Activated T-helper 2 cell treated with anti-CD3 and anti-CD28 coated beads, Interferon-gamma antibody, Interleukin-2, Interleukin-4, amounts not matched to agents 10 μg/mL and 5 μg/mL and 100 μg/mL, durations not matched to agents 14 hours and 24 hours and 36 hours (primary cell): ENCODE measurements at regions of chr5 and their contacts with region 1.

Region 1: DNA sequence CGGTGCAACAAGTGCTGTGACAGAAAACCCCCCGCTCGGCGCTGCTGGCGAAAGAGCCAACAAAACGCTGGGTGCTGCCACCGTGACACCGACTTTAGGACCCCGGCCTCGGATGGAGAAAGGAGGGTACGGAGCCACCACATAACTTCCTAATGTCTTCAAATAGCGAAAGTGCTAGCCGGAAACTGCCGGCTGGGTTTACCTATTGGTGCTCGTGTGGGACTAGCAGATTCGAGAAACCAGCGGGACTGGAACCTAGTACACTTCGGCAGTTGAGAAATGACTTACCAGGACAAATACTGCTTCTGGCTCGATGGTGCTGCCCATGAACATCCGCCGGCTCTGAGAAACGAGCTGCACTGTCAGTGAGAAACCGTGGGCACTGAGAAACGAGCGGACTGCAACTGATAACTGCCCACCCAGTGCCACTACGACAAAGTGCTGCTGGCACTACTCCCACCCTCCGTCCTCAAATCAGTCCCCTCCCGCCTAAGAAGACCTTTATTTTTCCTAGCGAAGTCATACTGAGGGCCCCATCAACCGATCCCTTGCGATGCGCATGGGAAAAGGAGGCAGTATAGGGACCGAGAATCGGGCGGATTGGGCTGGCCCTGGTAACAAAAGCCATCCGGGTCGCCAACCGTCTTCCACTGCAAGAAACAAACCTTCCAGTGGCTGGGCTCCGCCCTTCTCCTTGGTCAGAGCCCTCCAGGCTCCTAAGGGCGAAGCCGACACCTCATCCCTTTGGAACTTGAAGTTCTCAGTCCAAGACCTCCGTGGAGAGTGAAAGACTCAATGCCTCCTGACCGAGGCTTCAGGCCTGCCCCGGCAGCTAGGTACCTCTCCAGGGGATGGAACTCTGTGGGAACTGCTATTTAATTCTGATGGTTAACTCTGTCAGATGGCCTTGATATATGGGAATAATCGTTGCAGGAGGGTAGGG is 27.0 kb upstream of the ANXA2R start:
- DNase-seq: peak; percentile 85
- H3K4me3 Mint-ChIP-seq: peak overlapping the region; percentile 91
- H3K27ac Mint-ChIP-seq: peak overlapping the region; percentile 97
- H3K4me1 Mint-ChIP-seq: peaks cover 32% of the 10 kb centered on the region
- H3K27me3 Mint-ChIP-seq: no peaks in the 10 kb centered on the region

Region 2: GRCh38 chr5:42994246-42995151 is 72.6 kb before region 1 on chr5:
- intact Hi-C with region 1: loop called (anchors 1 kb)
- DNase-seq: peak; percentile 86
- H3K4me3 Mint-ChIP-seq: peak overlapping the region; percentile 100
- H3K27ac Mint-ChIP-seq: peak overlapping the region; percentile 100
- H3K4me1 Mint-ChIP-seq: peaks cover 32% of the 10 kb centered on the region
- H3K27me3 Mint-ChIP-seq: no peaks in the 10 kb centered on the region

Region 3: DNA sequence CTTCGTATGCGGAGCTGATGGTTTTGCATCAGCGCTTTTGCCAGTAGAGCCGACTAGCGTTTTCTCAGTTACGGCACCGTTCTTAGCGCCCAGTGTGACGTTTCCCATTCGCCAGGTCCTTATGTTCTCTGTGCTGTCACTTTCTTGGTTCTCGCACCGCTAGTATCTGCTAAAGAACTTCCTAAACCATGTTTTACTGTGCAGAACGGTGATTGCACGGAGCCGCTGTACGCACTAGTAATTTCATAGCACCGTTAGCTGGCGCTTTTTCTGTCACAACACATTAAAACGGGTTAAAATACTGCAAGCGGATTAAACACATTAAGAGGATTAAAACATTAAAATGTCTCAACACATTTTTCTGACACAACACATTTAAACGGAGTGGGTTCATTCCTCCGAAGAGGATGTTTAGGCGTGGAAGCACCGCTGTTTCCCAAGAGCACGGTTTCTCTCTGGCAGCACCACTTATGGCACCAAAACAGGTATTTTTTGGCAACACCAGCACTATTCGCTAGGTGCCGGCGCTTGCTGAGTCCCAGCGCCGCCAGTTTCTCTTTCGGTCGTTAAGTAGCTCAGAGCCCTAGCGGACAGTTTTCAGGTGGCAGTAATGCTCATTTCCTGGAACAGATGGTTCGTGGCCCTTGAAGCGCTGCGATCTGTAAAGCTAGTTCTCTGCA is 47.3 kb before region 1 on chr5:
- intact Hi-C with region 1: loop called (anchors 1 kb)
- DNase-seq: peak; percentile 84
- H3K4me3 Mint-ChIP-seq: peak overlapping the region; percentile 96
- H3K27ac Mint-ChIP-seq: peak overlapping the region; percentile 99
- H3K4me1 Mint-ChIP-seq: peaks cover 38% of the 10 kb centered on the region
- H3K27me3 Mint-ChIP-seq: no peaks in the 10 kb centered on the region

Region 4: DNA sequence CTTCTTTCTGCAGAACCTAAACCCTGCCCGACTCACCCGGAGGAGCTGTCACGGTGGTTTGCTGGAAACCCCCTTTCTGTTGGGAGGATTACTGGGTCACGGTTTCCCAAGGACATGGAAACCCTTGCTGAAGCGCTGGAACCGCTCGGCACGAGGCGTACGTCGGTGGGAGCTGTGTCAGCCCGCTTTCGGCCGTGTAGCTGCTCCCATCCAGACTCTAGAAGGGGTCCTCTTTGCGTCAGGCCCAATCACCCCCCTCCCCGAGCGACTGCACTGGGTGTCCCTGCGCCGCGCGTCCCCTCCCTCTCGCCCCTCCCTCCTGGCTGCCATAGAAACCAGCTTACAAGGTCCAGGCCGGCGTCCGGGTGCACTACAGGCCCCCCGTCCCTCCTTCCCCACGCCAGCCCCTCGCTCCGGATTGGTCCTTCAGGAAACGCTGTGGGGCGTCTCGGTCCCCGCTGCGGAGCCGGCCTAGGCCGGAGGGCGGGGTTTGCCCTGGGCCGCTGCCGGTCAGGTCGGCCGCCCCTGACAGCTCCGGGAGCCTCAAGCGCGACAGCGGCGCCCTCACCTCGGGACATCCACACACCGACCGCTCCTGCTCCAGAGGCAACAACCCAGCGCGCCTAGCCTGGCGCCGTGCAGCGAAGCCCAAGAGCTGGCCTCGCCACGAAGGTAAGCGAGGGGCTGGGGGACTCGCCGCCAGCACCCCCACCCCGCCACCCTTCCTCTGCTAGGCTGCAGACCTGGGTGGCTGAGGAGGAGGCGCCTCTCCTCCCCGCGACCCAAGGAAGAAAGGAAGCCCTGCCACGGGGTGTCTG is 124.9 kb after region 1 on chr5 and contains the start of gene NIM1K:
- intact Hi-C with region 1: loop called (anchors 2 kb)
- DNase-seq: peak; percentile 35
- H3K4me3 Mint-ChIP-seq: peak within 1 kb of the TSS; percentile 82
- H3K27ac Mint-ChIP-seq: peak within 1 kb of the TSS; percentile 59
- H3K4me1 Mint-ChIP-seq: peaks cover 24% of the 10 kb centered on the region
- H3K27me3 Mint-ChIP-seq: peaks cover 10% of the 10 kb centered on the region
- total RNA-seq, gene NIM1K: 0.76 and 1.1 TPM in 2 replicates

Region 5: DNA sequence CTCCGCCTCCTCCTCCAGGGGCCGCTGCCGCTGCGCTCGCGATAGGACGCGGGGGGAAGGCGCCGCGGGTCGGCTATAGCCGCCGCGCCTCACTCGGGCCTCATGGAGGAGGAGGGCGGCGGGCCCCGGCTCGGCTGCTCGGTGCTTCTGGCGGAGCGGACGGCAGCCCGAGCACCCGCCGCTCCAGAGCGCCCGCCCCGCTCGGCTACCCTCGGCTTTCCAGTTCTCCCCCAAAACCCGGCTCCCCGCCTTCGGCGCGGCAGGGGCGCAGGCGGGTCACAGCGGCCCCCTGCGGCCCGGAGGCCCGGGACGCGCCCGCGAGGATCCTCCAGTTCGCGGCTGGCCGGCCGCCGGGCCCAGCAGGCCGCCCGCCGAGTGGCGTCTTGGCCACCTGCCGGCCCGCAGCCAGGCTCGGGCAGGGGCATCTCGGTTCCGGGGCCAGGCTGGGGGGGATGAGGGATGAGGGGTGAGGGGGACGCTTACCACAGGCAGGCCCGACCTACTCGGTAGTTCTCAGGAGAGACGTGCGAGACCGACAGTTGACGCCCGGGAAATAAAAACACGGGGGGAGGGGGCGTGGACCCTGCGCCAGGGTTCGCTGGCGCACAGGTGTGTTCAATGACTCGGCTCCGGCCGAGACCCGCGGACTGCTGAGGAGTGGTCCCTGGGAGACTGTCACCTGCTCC is 489.9 kb after region 1 on chr5 and contains the start of gene PAIP1:
- intact Hi-C with region 1: loop called (anchors 5 kb)
- DNase-seq: peak; percentile 84
- H3K4me3 Mint-ChIP-seq: peak within 1 kb of the TSS; percentile 86
- H3K27ac Mint-ChIP-seq: peak within 1 kb of the TSS; percentile 90
- H3K4me1 Mint-ChIP-seq: peaks cover 8% of the 10 kb centered on the region
- H3K27me3 Mint-ChIP-seq: peaks cover 9% of the 10 kb centered on the region
- total RNA-seq, gene PAIP1: 56.8 and 58.0 TPM in 2 replicates